ENCODE measurements at regions of chr12 and their contacts with region 1.

Region 1: GRCh38 chr12:123142921-123143735 is 7.8 kb downstream of the PITPNM2 start:
- DNase-seq: no peak
- CTCF ChIP-seq: no peak

Region 2: GRCh38 chr12:123163227-123163626 is 20.1 kb after region 1 on chr12:
- CTCF ChIA-PET with region 1: interaction called, 3 read pairs
- POLR2A ChIA-PET with region 1: interaction called, 11 read pairs
- DNase-seq: no peak
- CTCF ChIP-seq: no peak

Measured in GM10248 (cell line).